Mammary epithelial cell (primary cell): ENCODE measurements at regions of chr1 and their contacts with region 1.

Region 1: DNA sequence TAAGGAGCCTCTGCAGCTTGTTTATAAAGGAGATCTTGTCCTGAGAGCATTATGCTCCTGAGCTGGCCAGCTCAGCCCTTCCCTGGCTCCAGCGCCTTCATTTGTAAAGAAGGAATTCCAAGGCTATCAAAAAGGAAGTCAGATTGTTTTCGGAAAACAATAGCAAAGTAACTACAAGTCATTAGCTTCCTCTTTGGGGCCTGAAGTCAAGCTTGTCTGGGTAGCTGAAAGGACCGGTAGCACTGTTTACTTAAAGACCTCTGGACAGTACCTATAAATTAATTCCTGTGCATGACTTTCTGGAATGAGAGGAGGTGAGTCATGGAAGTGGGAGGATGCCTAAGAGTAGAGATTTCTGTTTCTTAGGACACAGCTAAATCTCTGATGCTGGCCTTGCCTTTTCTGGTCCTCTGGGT is 20.7 kb upstream of the GJA5 start:
- DNase-seq: peak; percentile 42
- H3K4me3 ChIP-seq: no peak overlapping the region
- H3K27ac ChIP-seq: no peak overlapping the region
- H3K4me1 ChIP-seq: peaks cover 3% of the 10 kb centered on the region
- H3K27me3 ChIP-seq: no peaks in the 10 kb centered on the region
- CTCF ChIP-seq: no peak

Region 2: DNA sequence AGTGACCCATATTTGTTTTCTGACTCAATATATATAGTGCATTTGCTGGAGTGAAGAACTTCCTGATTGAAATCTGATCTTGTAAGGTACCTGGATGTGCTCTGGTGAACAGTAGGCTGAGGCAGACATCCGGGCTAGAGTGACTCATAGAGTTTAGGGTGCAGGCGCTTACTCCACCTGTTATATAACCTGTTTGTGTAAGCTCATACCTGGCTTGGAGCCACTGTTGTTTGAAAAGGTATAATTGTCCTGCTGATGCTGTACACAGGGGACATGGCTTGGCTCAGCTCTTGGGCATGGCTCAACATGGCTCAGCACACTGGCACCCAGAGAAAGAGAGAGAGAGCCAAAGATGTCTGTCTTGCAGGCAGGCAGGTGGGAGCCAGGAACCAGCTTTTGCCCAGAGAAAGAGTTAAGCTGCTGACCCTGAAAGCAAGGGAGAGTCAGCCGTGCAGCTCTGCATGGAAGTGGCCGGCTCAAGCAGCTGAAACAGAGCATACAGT is 64.0 kb before region 1 on chr1:
- CTCF ChIA-PET with region 1: no interaction called
- dilution Hi-C with region 1: loop called (anchors 5 kb)
- in situ Hi-C with region 1: loop called in 1 of 2 experiments (anchors 10 kb)
- intact Hi-C with region 1: no loop called
- DNase-seq: peak; percentile 91
- H3K4me3 ChIP-seq: no peak overlapping the region
- H3K27ac ChIP-seq: no peak overlapping the region
- H3K4me1 ChIP-seq: peaks cover 29% of the 10 kb centered on the region
- H3K27me3 ChIP-seq: no peaks in the 10 kb centered on the region
- CTCF ChIP-seq: no peak

Region 3: GRCh38 chr1:147748676-147749350 is 32.3 kb before region 1 on chr1:
- CTCF ChIA-PET with region 1: no interaction called
- dilution Hi-C with region 1: loop called (anchors 5 kb)
- in situ Hi-C with region 1: no loop called
- intact Hi-C with region 1: no loop called
- DNase-seq: peak; percentile 45
- H3K4me3 ChIP-seq: no peak overlapping the region
- H3K27ac ChIP-seq: no peak overlapping the region
- H3K4me1 ChIP-seq: peaks cover 36% of the 10 kb centered on the region
- H3K27me3 ChIP-seq: no peaks in the 10 kb centered on the region
- CTCF ChIP-seq: no peak

Region 4: GRCh38 chr1:147821883-147822282 is 40.8 kb after region 1 on chr1:
- CTCF ChIA-PET with region 1: no interaction called
- dilution Hi-C with region 1: loop called (anchors 5 kb)
- in situ Hi-C with region 1: no loop called
- intact Hi-C with region 1: no loop called
- DNase-seq: no peak
- H3K4me3 ChIP-seq: no peak overlapping the region
- H3K27ac ChIP-seq: no peak overlapping the region
- H3K4me1 ChIP-seq: peaks cover 3% of the 10 kb centered on the region
- H3K27me3 ChIP-seq: no peaks in the 10 kb centered on the region
- CTCF ChIP-seq: no peak

Region 5: GRCh38 chr1:147840907-147841306 is 59.8 kb after region 1 on chr1:
- CTCF ChIA-PET with region 1: no interaction called
- dilution Hi-C with region 1: no loop called
- in situ Hi-C with region 1: no loop called
- intact Hi-C with region 1: no loop called
- DNase-seq: no peak
- H3K4me3 ChIP-seq: no peak overlapping the region
- H3K27ac ChIP-seq: no peak overlapping the region
- H3K4me1 ChIP-seq: no peaks in the 10 kb centered on the region
- H3K27me3 ChIP-seq: no peaks in the 10 kb centered on the region
- CTCF ChIP-seq: no peak

Region 6: DNA sequence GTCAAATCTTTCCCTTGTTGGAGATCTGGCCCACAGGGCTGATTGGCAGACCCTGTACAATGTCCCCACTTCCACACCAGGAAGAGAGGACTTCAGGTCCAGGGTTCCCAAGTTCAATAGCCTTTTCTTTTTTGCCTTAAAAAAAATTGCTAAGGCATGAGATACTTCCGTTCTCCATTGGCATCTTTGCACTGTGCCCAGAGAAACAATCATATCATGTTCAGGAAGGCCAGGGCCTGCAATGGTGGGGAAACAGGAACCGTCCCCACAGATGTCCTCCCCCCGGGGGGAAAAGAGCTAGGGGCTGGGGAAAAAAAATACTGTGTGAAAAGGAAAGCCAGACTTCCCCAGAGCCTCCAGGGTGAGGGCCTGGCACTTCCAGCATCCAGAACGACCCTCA is 97.0 kb after region 1 on chr1:
- CTCF ChIA-PET with region 1: no interaction called
- dilution Hi-C with region 1: loop called (anchors 5 kb)
- in situ Hi-C with region 1: no loop called
- intact Hi-C with region 1: no loop called
- DNase-seq: no peak
- H3K4me3 ChIP-seq: no peak overlapping the region
- H3K27ac ChIP-seq: no peak overlapping the region
- H3K4me1 ChIP-seq: no peaks in the 10 kb centered on the region
- H3K27me3 ChIP-seq: no peaks in the 10 kb centered on the region
- CTCF ChIP-seq: no peak